HCT116 (cell line): ENCODE measurements at regions of chr2 and their contacts with region 1.

Region 1: GRCh38 chr2:28751252-28751955 is at the start of gene PPP1CB:
- DNase-seq: peak; percentile 88
- ATAC-seq: peak; percentile 89
- H3K4me3 ChIP-seq: peak within 1 kb of the TSS; percentile 76 to 77
- H3K27ac ChIP-seq: peak within 1 kb of the TSS; percentile 95
- H3K4me1 ChIP-seq: peaks cover 3 to 19% of the 10 kb centered on the region in 2 experiments; a peak in 2 of 4 replicates
- H3K27me3 ChIP-seq: no peaks in the 10 kb centered on the region
- CTCF ChIP-seq: no peak; a peak in 1 of 6 replicates
- POLR2A ChIP-seq: peak; percentile 89
- RAD21 ChIP-seq: no peak; the same call in 1 of the 2 replicates
- total RNA-seq, gene PPP1CB: 174 TPM

Region 2: DNA sequence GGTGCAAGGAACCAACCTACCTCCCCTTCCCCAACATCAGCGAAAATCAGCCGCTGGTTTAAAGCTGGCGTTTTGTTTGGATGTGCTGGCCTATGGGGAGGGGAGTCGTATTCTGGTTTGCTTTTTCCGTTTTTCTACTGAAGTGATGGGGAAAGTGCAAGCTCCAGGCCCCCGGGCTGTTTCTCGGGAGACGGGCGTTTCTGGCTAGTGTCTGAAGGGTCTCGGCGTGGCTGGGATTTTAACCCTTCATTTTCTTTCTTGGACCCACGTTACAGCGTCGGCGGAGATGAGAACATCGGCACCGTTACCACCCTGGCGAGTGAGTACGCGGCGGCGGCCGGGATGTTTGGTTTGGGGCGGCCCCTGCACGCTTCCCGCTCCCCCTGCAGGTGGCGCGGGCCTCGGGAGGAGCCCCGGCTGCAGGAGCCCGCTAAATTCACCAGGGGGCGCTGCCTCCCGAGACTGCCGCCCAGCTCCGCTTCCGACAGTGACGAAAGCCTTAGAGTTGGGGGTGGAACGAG is 184.8 kb before region 1 on chr2:
- CTCF ChIA-PET with region 1: interaction called, 12 read pairs
- POLR2A ChIA-PET with region 1: interaction called, 3 read pairs
- RAD21 ChIA-PET with region 1: no interaction called
- intact Hi-C with region 1: loop called (anchors 1 kb)
- DNase-seq: peak; percentile 60
- ATAC-seq: peak; percentile 94
- H3K4me3 ChIP-seq: peak overlapping the region; percentile 46 to 64
- H3K27ac ChIP-seq: no peak overlapping the region
- H3K4me1 ChIP-seq: peaks cover 0 to 11% of the 10 kb centered on the region in 2 experiments; a peak in 3 of 4 replicates
- H3K27me3 ChIP-seq: no peaks in the 10 kb centered on the region
- CTCF ChIP-seq: peak; percentile 97 to 99 (median 98)
- POLR2A ChIP-seq: no peak
- RAD21 ChIP-seq: peak; percentile 95

Region 3: GRCh38 chr2:28621172-28622100 is 130.0 kb before region 1 on chr2:
- CTCF ChIA-PET with region 1: interaction called, 4 read pairs
- POLR2A ChIA-PET with region 1: interaction called, 6 read pairs
- RAD21 ChIA-PET with region 1: interaction called, 4 to 9 read pairs
- intact Hi-C with region 1: loop called (anchors 1 kb)
- DNase-seq: peak; percentile 58
- ATAC-seq: peak; percentile 97
- H3K4me3 ChIP-seq: peak overlapping the region in 1 of 2 experiments; percentile 14; a peak in 1 of 4 replicates
- H3K27ac ChIP-seq: peak overlapping the region; percentile 6; the same call in 1 of the 2 replicates
- H3K4me1 ChIP-seq: peaks cover 7 to 31% of the 10 kb centered on the region in 2 experiments; a peak in 3 of 4 replicates
- H3K27me3 ChIP-seq: no peaks in the 10 kb centered on the region
- CTCF ChIP-seq: peak; percentile 66 to 94 (median 79)
- POLR2A ChIP-seq: no peak
- RAD21 ChIP-seq: peak; percentile 89

Region 4: DNA sequence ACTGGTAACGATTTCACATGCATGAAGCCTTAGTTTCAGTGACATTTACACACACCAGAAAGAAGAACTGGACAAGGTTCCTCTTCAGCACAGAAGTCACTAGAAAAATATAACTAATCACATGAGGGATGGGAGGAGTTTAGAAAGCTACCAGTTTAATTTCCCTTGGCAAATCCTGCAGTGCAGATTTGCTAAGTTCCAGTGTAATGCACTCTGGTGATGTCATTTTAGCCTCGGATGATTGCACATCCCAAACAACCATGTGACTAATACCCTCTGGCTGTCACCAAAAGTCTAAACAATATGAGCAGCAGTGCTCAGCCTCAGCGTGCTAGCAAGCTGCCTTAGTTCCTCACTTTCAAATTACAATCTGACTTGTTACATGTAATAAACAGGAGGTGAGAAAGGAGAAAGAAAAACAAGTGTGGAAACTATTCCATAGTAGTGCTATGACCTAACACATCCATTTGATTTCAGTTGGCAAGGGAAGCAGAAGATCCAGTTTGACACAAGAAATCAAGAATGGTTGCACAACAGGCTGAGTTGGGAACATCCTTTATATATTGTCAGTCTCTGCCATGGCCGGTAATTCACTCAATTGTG is 35.0 kb before region 1 on chr2:
- CTCF ChIA-PET with region 1: interaction called, 3 read pairs
- POLR2A ChIA-PET with region 1: interaction called, 4 read pairs
- RAD21 ChIA-PET with region 1: no interaction called
- intact Hi-C with region 1: loop called (anchors 2 kb)
- DNase-seq: peak; percentile 64
- ATAC-seq: peak; percentile 40
- H3K4me3 ChIP-seq: no peak overlapping the region; a peak in 1 of 4 replicates
- H3K27ac ChIP-seq: no peak overlapping the region
- H3K4me1 ChIP-seq: peaks cover 38 to 67% of the 10 kb centered on the region in 2 experiments
- H3K27me3 ChIP-seq: no peaks in the 10 kb centered on the region
- CTCF ChIP-seq: no peak
- POLR2A ChIP-seq: no peak
- RAD21 ChIP-seq: no peak

Region 5: GRCh38 chr2:29561181-29561580 is 809.8 kb after region 1 on chr2:
- CTCF ChIA-PET with region 1: no interaction called
- POLR2A ChIA-PET with region 1: no interaction called
- RAD21 ChIA-PET with region 1: no interaction called
- intact Hi-C with region 1: no loop called
- DNase-seq: no peak
- ATAC-seq: no peak
- H3K4me3 ChIP-seq: no peak overlapping the region
- H3K27ac ChIP-seq: no peak overlapping the region
- H3K4me1 ChIP-seq: no peaks in the 10 kb centered on the region
- H3K27me3 ChIP-seq: peaks cover 33% of the 10 kb centered on the region
- CTCF ChIP-seq: no peak
- POLR2A ChIP-seq: no peak
- RAD21 ChIP-seq: no peak